ENCODE measurements at regions of chr1 and their contacts with region 1.

Region 1: GRCh38 chr1:109984456-109985275 is at the start of gene AHCYL1:
- DNase-seq: peak; percentile 97 to 100 (median 99)
- ATAC-seq: peak; percentile 98 to 99 (median 99)
- H3K4me3 ChIP-seq: peak within 1 kb of the TSS; percentile 87 to 88
- H3K4me3 Mint-ChIP-seq: peak within 1 kb of the TSS; percentile 97 to 98 (median 98)
- H3K27ac ChIP-seq: peak within 1 kb of the TSS; percentile 62
- H3K27ac Mint-ChIP-seq: peak within 1 kb of the TSS; percentile 95 to 98
- H3K4me1 ChIP-seq: peaks cover 13 to 17% of the 10 kb centered on the region in 2 experiments
- H3K4me1 Mint-ChIP-seq: peaks cover 28 to 43% (median 42%) of the 10 kb centered on the region in 3 donors
- H3K27me3 ChIP-seq: no peaks in the 10 kb centered on the region
- H3K27me3 Mint-ChIP-seq: no peaks in the 10 kb centered on the region
- total RNA-seq, gene AHCYL1: 23.0 to 41.6 (median 38.9) TPM

Region 2: GRCh38 chr1:109620841-109621286 is 363.8 kb before region 1 on chr1:
- CTCF ChIA-PET with region 1: interaction called in 1 of 2 experiments, 12 read pairs
- POLR2A ChIA-PET with region 1: no interaction called
- DNase-seq: peak; percentile 87 to 100 (median 97)
- ATAC-seq: peak; percentile 87 to 92 (median 90)
- H3K4me3 ChIP-seq: peak overlapping the region; percentile 88 to 98
- H3K4me3 Mint-ChIP-seq: peak overlapping the region; percentile 93 to 97 (median 96)
- H3K27ac ChIP-seq: peak overlapping the region; percentile 96
- H3K27ac Mint-ChIP-seq: peak overlapping the region; percentile 95 to 96
- H3K4me1 ChIP-seq: peaks cover 32 to 69% of the 10 kb centered on the region in 2 experiments
- H3K4me1 Mint-ChIP-seq: peaks cover 71 to 89% (median 77%) of the 10 kb centered on the region in 3 donors
- H3K27me3 ChIP-seq: no peaks in the 10 kb centered on the region
- H3K27me3 Mint-ChIP-seq: no peaks in the 10 kb centered on the region

Region 3: GRCh38 chr1:109773146-109773899 is 211.3 kb before region 1 on chr1:
- CTCF ChIA-PET with region 1: interaction called, 163 to 254 read pairs
- POLR2A ChIA-PET with region 1: interaction called, 5 to 13 read pairs
- DNase-seq: peak; percentile 37 to 82 (median 60)
- ATAC-seq: peak; percentile 83 to 94 (median 86)
- H3K4me3 ChIP-seq: no peak overlapping the region
- H3K4me3 Mint-ChIP-seq: no peak overlapping the region
- H3K27ac ChIP-seq: no peak overlapping the region
- H3K27ac Mint-ChIP-seq: no peak overlapping the region
- H3K4me1 ChIP-seq: peaks cover 0 to 18% of the 10 kb centered on the region in 2 experiments
- H3K4me1 Mint-ChIP-seq: peaks cover 7 to 16% (median 9%) of the 10 kb centered on the region in 3 donors
- H3K27me3 ChIP-seq: peaks cover 0 to 20% of the 10 kb centered on the region in 2 experiments
- H3K27me3 Mint-ChIP-seq: no peaks in the 10 kb centered on the region

Region 4: DNA sequence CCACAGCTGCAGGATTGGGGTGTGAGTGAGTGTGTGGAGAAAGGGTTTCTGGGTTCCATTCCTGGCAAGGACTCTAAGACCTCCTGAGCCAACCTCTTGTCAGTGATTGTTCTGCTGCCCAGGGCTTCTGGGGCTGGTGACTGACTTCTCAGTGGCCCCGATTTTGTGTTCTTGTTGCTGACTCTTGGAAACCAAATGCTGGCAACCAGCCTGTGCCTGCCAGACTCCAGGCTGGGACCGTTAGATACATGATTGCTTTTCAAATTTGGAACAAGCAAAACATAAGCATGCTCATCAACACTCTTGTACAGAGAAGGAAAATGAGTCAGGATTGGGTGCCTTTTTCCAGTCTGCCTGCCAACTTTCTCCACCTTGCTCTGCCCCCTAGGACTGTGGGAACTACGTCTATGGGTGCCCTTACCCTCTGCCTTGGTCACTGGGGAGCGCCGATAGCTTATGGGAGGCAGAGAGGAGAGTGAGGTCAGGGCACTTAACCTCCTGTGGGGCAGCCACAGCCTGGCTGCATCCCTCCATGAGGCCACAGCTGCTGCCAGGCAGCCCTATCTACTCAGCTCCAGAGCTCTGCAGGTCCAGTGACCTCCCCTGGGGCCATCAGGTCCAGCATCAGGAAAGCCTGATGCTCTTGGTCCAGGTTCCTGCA is 181.6 kb before region 1 on chr1:
- CTCF ChIA-PET with region 1: interaction called in 1 of 2 experiments, 12 read pairs
- POLR2A ChIA-PET with region 1: no interaction called
- DNase-seq: peak in 1 of 35 experiments; percentile 9
- ATAC-seq: no peak
- H3K4me3 ChIP-seq: peak overlapping the region; percentile 10 to 35
- H3K4me3 Mint-ChIP-seq: peak overlapping the region in 2 of 3 donors; percentile 65
- H3K27ac ChIP-seq: peak overlapping the region; percentile 75
- H3K27ac Mint-ChIP-seq: peak overlapping the region; percentile 95 to 97
- H3K4me1 ChIP-seq: peaks cover 30 to 75% of the 10 kb centered on the region in 2 experiments
- H3K4me1 Mint-ChIP-seq: peaks cover 77 to 89% (median 86%) of the 10 kb centered on the region in 3 donors
- H3K27me3 ChIP-seq: no peaks in the 10 kb centered on the region
- H3K27me3 Mint-ChIP-seq: no peaks in the 10 kb centered on the region

Region 5: DNA sequence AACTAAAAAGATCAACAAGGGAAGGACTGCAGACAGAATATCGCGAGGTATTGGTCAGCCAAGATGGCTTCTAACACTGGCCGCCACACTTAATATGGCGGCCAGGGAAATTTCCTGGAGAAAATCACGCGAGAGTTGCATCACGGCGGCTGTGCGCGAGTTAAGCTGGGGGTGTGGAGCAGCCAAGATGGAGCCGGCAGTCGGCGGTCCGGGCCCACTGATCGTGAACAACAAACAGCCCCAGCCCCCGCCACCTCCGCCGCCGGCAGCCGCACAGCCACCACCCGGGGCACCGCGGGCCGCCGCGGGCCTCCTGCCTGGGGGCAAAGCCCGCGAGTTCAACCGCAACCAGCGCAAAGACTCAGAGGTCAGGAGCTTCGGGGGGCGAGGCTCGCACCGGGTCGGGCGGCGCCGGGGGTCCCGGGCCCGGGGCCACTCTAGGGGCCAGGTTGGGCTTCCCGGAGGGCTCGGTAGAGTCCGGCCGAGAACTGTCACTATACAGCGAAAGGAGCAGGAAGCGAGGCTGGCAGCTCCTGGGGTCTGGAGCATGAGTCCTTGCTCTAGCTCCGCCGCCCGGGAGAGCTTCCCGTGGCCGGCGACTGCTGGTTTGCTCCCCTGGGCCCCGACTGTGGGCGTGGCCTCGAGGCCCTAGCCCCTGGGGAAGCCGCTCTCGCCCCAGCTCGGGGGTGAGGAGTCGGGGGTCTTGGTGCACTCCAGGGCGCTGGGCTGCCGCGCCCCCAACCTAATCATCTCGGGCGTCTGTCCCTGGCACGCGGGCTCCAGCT is 50.0 kb after region 1 on chr1 and contains the start of gene STRIP1:
- CTCF ChIA-PET with region 1: interaction called in 1 of 2 experiments, 20 read pairs
- POLR2A ChIA-PET with region 1: interaction called in 1 of 2 experiments, 3 read pairs
- DNase-seq: peak; percentile 80 to 97 (median 91)
- ATAC-seq: peak; percentile 96 to 97 (median 96)
- H3K4me3 ChIP-seq: peak within 1 kb of the TSS; percentile 91 to 93
- H3K4me3 Mint-ChIP-seq: peak within 1 kb of the TSS; percentile 84 to 96 (median 92)
- H3K27ac ChIP-seq: peak within 1 kb of the TSS; percentile 67
- H3K27ac Mint-ChIP-seq: peak within 1 kb of the TSS; percentile 85 to 93
- H3K4me1 ChIP-seq: peaks cover 18 to 40% of the 10 kb centered on the region in 2 experiments
- H3K4me1 Mint-ChIP-seq: peaks cover 52 to 65% (median 53%) of the 10 kb centered on the region in 3 donors
- H3K27me3 ChIP-seq: no peaks in the 10 kb centered on the region
- H3K27me3 Mint-ChIP-seq: no peaks in the 10 kb centered on the region
- total RNA-seq, gene STRIP1: 70.6 to 87.2 (median 73.3) TPM

Measured in T-cell (primary cell).